SK-N-SH (cell line): ENCODE measurements at regions of chr7 and their contacts with region 1.

Region 1: GRCh38 chr7:116138202-116138801 is 72.0 kb upstream of the TES start:
- DNase-seq: peak; percentile 44
- H3K4me3 ChIP-seq: no peak overlapping the region
- H3K27ac ChIP-seq: no peak overlapping the region
- H3K4me1 ChIP-seq: no peaks in the 10 kb centered on the region
- H3K27me3 ChIP-seq: peaks cover 46% of the 10 kb centered on the region
- CTCF ChIP-seq: peak; percentile 98
- EP300 ChIP-seq: no peak
- RAD21 ChIP-seq: peak; percentile 79

Region 2: GRCh38 chr7:116114509-116114908 is 23.8 kb before region 1 on chr7:
- CTCF ChIA-PET with region 1: interaction called, 10 read pairs
- POLR2A ChIA-PET with region 1: no interaction called
- DNase-seq: no peak
- H3K4me3 ChIP-seq: no peak overlapping the region
- H3K27ac ChIP-seq: no peak overlapping the region
- H3K4me1 ChIP-seq: no peaks in the 10 kb centered on the region
- H3K27me3 ChIP-seq: peaks cover 38% of the 10 kb centered on the region
- CTCF ChIP-seq: no peak
- EP300 ChIP-seq: no peak
- RAD21 ChIP-seq: no peak

Region 3: GRCh38 chr7:116122972-116123595 is 15.2 kb before region 1 on chr7:
- CTCF ChIA-PET with region 1: interaction called, 18 read pairs
- POLR2A ChIA-PET with region 1: no interaction called
- DNase-seq: peak; percentile 17
- H3K4me3 ChIP-seq: no peak overlapping the region; a peak in 1 of 4 replicates
- H3K27ac ChIP-seq: no peak overlapping the region
- H3K4me1 ChIP-seq: no peaks in the 10 kb centered on the region
- H3K27me3 ChIP-seq: peaks cover 27% of the 10 kb centered on the region; the same call in 1 of the 2 replicates
- CTCF ChIP-seq: peak; percentile 93
- EP300 ChIP-seq: no peak
- RAD21 ChIP-seq: peak; percentile 65

Region 4: GRCh38 chr7:116128139-116128538 is 10.2 kb before region 1 on chr7:
- CTCF ChIA-PET with region 1: interaction called, 18 read pairs
- POLR2A ChIA-PET with region 1: no interaction called
- DNase-seq: no peak
- H3K4me3 ChIP-seq: no peak overlapping the region
- H3K27ac ChIP-seq: no peak overlapping the region
- H3K4me1 ChIP-seq: no peaks in the 10 kb centered on the region
- H3K27me3 ChIP-seq: peaks cover 31% of the 10 kb centered on the region
- CTCF ChIP-seq: no peak
- EP300 ChIP-seq: no peak
- RAD21 ChIP-seq: no peak

Region 5: GRCh38 chr7:116165717-116166116 is 27.4 kb after region 1 on chr7:
- CTCF ChIA-PET with region 1: interaction called, 13 read pairs
- POLR2A ChIA-PET with region 1: no interaction called
- DNase-seq: no peak
- H3K4me3 ChIP-seq: no peak overlapping the region
- H3K27ac ChIP-seq: no peak overlapping the region
- H3K4me1 ChIP-seq: no peaks in the 10 kb centered on the region
- H3K27me3 ChIP-seq: peaks cover 72% of the 10 kb centered on the region
- CTCF ChIP-seq: no peak
- EP300 ChIP-seq: no peak
- RAD21 ChIP-seq: no peak

Region 6: GRCh38 chr7:116478834-116479233 is 340.5 kb after region 1 on chr7:
- CTCF ChIA-PET with region 1: no interaction called
- POLR2A ChIA-PET with region 1: no interaction called
- DNase-seq: no peak
- H3K4me3 ChIP-seq: no peak overlapping the region
- H3K27ac ChIP-seq: peak overlapping the region; percentile 39 to 83
- H3K4me1 ChIP-seq: peaks cover 4 to 14% of the 10 kb centered on the region in 2 experiments; a peak in 3 of 4 replicates
- H3K27me3 ChIP-seq: no peaks in the 10 kb centered on the region
- CTCF ChIP-seq: no peak
- EP300 ChIP-seq: no peak
- RAD21 ChIP-seq: no peak